ENCODE measurements at regions of chr5 and their contacts with region 1.

Region 1: GRCh38 chr5:53035868-53036381 is 46.8 kb downstream of the ITGA2 start:
- DNase-seq: peak; percentile 20
- ATAC-seq: no peak
- H3K4me3 Mint-ChIP-seq: no peak overlapping the region
- H3K27ac Mint-ChIP-seq: no peak overlapping the region
- H3K4me1 Mint-ChIP-seq: peaks cover 33% of the 10 kb centered on the region
- H3K27me3 Mint-ChIP-seq: peaks cover 6% of the 10 kb centered on the region

Region 2: GRCh38 chr5:52989781-52990527 is 46.0 kb before region 1 on chr5:
- CTCF ChIA-PET with region 1: interaction called, 5 read pairs
- POLR2A ChIA-PET with region 1: no interaction called
- intact Hi-C with region 1: loop called in 1 of 2 experiments (anchors 5 kb)
- DNase-seq: peak; percentile 62
- ATAC-seq: peak; percentile 50
- H3K4me3 Mint-ChIP-seq: peak overlapping the region; percentile 65
- H3K27ac Mint-ChIP-seq: no peak overlapping the region
- H3K4me1 Mint-ChIP-seq: peaks cover 16% of the 10 kb centered on the region
- H3K27me3 Mint-ChIP-seq: peaks cover 42% of the 10 kb centered on the region

Region 3: GRCh38 chr5:53089345-53089991 is 53.5 kb after region 1 on chr5:
- CTCF ChIA-PET with region 1: interaction called, 32 read pairs
- POLR2A ChIA-PET with region 1: interaction called, 4 read pairs
- intact Hi-C with region 1: loop called (anchors 1 to 2 kb)
- DNase-seq: no peak
- ATAC-seq: peak; percentile 86
- H3K4me3 Mint-ChIP-seq: peak overlapping the region; percentile 60
- H3K27ac Mint-ChIP-seq: peak overlapping the region; percentile 83
- H3K4me1 Mint-ChIP-seq: peaks cover 30% of the 10 kb centered on the region
- H3K27me3 Mint-ChIP-seq: peaks cover 2% of the 10 kb centered on the region